ENCODE measurements at regions of chr2 and their contacts with region 1.

Region 1: DNA sequence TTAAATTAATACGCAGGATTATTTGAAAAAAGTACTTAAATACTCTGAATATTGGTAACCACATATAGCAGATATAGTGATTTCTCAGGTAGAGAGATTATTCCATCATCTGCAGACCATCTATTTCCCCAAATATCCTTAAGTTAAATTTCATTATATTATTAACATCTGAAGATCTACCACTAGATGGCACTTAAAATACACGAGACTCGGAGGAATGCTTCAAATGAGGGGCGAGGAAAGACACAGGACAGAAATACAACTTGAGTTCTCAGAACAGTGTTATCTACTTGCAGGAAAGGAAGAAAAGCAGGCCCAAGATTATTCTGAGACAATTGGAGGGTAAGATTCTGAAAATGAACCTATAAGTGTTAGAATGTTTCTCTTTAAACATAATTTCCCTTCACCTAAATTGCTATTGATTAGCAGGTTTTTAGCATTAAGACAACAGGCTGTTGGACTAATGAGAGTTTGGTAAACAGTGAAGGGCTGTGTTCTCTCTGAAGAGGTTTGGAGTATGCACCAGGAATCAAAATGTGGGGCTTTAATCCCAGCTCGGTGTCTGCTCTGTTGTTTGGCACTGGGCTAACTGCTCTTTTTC is 76.9 kb upstream of the GCFC2 start:
- DNase-seq: no peak
- H3K4me3 Mint-ChIP-seq: no peak overlapping the region
- H3K27ac Mint-ChIP-seq: no peak overlapping the region
- H3K4me1 Mint-ChIP-seq: no peaks in the 10 kb centered on the region
- H3K27me3 Mint-ChIP-seq: peaks cover 13% of the 10 kb centered on the region

Region 2: GRCh38 chr2:75646583-75647425 is 140.8 kb before region 1 on chr2 and contains the start of gene MRPL19:
- CTCF ChIA-PET with region 1: no interaction called
- intact Hi-C with region 1: loop called (anchors 10 kb)
- DNase-seq: peak; percentile 86
- H3K4me3 Mint-ChIP-seq: peak within 1 kb of the TSS; percentile 90
- H3K27ac Mint-ChIP-seq: peak within 1 kb of the TSS; percentile 88
- H3K4me1 Mint-ChIP-seq: peaks cover 28% of the 10 kb centered on the region
- H3K27me3 Mint-ChIP-seq: no peaks in the 10 kb centered on the region
- total RNA-seq, gene MRPL19: 70.3 to 71.7 TPM

Region 3: DNA sequence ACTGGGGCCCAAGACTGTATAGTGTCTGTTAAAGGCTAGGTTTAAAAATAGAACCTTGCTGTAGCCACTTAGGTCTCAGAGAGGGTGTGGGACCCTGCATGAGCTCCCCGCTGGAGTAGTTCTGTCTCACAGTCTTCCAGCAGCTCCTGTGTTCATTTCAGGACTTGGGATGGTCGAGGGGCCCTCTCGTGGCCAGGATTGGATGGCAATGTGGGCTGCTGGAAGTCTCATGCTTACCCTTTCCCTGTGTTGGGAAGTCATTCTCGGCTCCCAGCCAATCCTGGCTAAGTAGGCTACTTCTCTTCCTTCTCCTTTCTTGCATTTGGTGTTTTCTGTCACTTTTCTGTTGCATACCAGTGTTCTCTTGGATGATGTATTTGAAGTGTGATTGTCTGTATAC is 207.1 kb after region 1 on chr2:
- CTCF ChIA-PET with region 1: no interaction called
- intact Hi-C with region 1: no loop called
- DNase-seq: no peak
- H3K4me3 Mint-ChIP-seq: no peak overlapping the region
- H3K27ac Mint-ChIP-seq: no peak overlapping the region
- H3K4me1 Mint-ChIP-seq: no peaks in the 10 kb centered on the region
- H3K27me3 Mint-ChIP-seq: no peaks in the 10 kb centered on the region

Region 4: GRCh38 chr2:76599732-76600368 is 812.2 kb after region 1 on chr2:
- CTCF ChIA-PET with region 1: interaction called, 4 read pairs
- intact Hi-C with region 1: loop called (anchors 10 kb)
- DNase-seq: peak; percentile 11
- H3K4me3 Mint-ChIP-seq: no peak overlapping the region
- H3K27ac Mint-ChIP-seq: no peak overlapping the region
- H3K4me1 Mint-ChIP-seq: no peaks in the 10 kb centered on the region
- H3K27me3 Mint-ChIP-seq: no peaks in the 10 kb centered on the region

Measured in activated naive CD4-positive, alpha-beta T cell treated with anti-CD3 and anti-CD28 coated beads for 36 hours (primary cell).